Activated naive CD4-positive, alpha-beta T cell treated with anti-CD3 and anti-CD28 coated beads, Interleukin-2, amount 10 ng/mL, durations not matched to agents 7 days and 5 days (primary cell): ENCODE measurements at regions of chr15 and their contacts with region 1.

Region 1: DNA sequence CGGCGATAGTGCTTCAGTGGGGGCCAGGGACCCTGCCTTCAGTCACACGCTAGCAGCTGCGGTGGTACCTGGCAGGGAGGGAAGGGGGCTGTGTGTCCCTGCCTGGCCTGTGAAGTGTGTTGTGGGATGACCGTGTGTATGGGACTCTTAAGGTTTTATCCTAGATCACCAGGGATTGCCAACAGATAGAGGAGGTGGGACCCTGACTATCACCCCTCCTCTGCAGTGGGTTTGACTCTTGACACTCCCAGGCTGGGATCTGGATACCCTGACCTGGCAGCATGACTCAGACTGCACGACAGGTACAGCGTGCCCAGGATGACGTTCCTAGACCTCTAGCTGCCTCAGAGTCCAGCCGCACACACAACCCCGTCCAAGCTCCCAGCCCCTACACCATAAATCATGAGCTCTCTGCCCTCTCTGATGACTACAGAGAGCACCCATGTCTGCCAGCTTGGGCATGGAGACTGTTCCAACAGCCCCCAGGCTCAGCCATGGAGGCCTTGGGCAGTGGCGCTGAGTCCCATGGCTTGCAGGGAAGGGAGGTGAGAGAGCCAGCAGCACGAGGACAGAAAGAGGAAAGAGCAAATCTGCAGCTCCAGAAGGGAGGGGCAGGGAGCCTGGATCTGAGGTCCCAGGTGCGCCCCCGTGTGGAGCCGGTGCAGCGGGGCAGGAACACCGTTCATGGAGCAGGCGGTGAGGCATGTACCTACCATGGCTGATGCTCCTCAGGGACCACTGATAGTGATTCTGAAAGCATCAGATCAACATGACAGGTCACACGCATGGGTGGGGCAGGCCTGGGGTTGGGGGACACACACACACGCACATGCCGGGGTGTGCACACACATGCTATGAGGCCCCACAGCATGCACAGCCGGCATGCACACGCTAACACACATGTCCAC is 71.0 kb downstream of the ADAMTS7 start:
- DNase-seq: peak; percentile 82
- H3K4me3 Mint-ChIP-seq: no peak overlapping the region
- H3K27ac Mint-ChIP-seq: no peak overlapping the region
- H3K4me1 Mint-ChIP-seq: peaks cover 3% of the 10 kb centered on the region
- H3K27me3 Mint-ChIP-seq: peaks cover 33% of the 10 kb centered on the region

Region 2: DNA sequence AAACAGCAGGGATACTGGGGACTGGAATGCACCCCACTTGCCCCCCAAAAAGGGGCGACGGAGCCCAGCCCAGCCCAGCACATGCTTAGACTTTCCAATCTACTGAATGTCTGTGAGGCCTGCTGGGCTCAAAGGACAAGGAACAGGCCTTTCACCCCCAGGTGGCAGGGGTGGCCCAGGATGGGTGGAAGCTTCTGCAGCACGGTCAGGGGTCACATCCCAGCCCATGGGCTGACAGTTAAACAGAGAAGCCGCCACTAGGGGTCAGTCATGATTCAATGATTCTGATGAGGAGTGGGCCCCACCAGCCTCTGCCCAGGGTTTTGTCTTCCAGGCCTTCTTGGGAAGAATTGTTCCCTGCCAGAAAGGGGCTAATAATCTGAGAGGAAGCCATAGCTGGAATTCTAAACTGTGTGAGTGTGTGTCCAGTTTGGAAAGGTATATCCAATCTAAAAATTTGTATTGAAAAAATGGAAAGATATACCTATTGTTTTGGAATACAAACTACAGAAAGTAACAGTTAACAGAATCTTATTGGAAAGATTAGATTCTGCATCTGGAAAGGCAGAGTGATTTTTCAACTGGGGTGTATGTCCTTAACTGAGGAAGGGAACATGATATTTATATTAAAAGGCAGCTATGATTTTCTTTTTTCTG is 101.5 kb before region 1 on chr15:
- CTCF ChIA-PET with region 1: interaction called, 10 read pairs
- DNase-seq: peak; percentile 68
- H3K4me3 Mint-ChIP-seq: no peak overlapping the region
- H3K27ac Mint-ChIP-seq: no peak overlapping the region
- H3K4me1 Mint-ChIP-seq: peaks cover 15% of the 10 kb centered on the region
- H3K27me3 Mint-ChIP-seq: peaks cover 59% of the 10 kb centered on the region

Region 3: DNA sequence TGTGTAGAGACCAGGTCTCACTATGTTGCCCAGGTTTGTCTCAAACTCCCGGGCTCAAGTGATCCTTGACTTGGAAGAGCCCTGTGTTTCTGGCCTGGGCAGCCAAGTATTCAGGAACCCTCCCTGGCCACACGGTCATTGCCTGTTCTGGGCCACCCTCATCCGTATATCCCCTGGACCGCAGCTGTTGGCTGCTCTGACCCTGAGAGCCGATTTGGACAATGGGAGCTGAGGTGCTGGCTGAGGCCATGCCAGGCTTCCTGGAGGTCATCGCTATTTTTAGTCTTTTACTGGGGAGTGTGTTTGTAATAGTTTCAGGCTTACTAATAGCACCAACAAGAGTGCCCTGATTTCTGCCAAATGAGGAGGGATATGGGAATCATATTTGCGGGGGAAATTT is 10.3 kb after region 1 on chr15:
- CTCF ChIA-PET with region 1: interaction called, 31 read pairs
- DNase-seq: no peak
- H3K4me3 Mint-ChIP-seq: no peak overlapping the region
- H3K27ac Mint-ChIP-seq: no peak overlapping the region
- H3K4me1 Mint-ChIP-seq: peaks cover 4% of the 10 kb centered on the region
- H3K27me3 Mint-ChIP-seq: peaks cover 14% of the 10 kb centered on the region

Region 4: DNA sequence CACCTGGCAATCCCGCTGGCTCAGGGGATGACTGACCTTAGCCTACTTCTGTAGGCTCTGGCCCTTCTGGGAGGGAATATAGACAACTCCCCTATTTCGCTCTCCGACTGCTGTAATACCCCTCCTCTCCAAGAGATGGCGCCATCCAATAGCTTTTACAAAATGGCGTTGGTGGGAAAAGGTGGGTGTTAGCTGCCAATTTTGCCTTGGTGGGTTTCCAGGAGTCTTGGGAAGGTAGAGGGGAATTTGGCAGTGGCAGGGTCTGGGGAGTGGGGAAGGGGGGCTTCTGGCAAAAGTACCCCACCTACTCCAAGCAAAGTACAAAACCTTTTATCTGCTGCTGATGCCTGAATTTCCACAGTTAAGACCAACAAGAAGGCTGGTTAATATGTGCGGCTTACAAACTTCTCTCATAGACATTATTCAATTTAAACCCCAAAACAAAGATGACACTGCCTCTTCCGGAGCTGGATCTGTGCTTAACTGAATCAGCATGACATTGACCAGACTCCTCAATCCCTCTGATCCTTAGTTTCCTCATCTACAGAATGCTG is 288.2 kb after region 1 on chr15:
- CTCF ChIA-PET with region 1: no interaction called
- DNase-seq: peak; percentile 56
- H3K4me3 Mint-ChIP-seq: no peak overlapping the region
- H3K27ac Mint-ChIP-seq: no peak overlapping the region
- H3K4me1 Mint-ChIP-seq: no peaks in the 10 kb centered on the region
- H3K27me3 Mint-ChIP-seq: peaks cover 6% of the 10 kb centered on the region